ENCODE measurements at regions of chr11 and their contacts with region 1.

Region 1: GRCh38 chr11:61004180-61004611 is 32.7 kb downstream of the CD6 start:
- DNase-seq: peak; percentile 80
- H3K4me3 Mint-ChIP-seq: peak overlapping the region; percentile 82
- H3K27ac Mint-ChIP-seq: peak overlapping the region; percentile 91
- H3K4me1 Mint-ChIP-seq: peaks cover 69% of the 10 kb centered on the region
- H3K27me3 Mint-ChIP-seq: no peaks in the 10 kb centered on the region

Region 2: GRCh38 chr11:60725592-60725991 is 278.6 kb before region 1 on chr11:
- intact Hi-C with region 1: no loop called
- DNase-seq: no peak
- H3K4me3 Mint-ChIP-seq: no peak overlapping the region
- H3K27ac Mint-ChIP-seq: no peak overlapping the region
- H3K4me1 Mint-ChIP-seq: no peaks in the 10 kb centered on the region
- H3K27me3 Mint-ChIP-seq: peaks cover 3% of the 10 kb centered on the region

Region 3: DNA sequence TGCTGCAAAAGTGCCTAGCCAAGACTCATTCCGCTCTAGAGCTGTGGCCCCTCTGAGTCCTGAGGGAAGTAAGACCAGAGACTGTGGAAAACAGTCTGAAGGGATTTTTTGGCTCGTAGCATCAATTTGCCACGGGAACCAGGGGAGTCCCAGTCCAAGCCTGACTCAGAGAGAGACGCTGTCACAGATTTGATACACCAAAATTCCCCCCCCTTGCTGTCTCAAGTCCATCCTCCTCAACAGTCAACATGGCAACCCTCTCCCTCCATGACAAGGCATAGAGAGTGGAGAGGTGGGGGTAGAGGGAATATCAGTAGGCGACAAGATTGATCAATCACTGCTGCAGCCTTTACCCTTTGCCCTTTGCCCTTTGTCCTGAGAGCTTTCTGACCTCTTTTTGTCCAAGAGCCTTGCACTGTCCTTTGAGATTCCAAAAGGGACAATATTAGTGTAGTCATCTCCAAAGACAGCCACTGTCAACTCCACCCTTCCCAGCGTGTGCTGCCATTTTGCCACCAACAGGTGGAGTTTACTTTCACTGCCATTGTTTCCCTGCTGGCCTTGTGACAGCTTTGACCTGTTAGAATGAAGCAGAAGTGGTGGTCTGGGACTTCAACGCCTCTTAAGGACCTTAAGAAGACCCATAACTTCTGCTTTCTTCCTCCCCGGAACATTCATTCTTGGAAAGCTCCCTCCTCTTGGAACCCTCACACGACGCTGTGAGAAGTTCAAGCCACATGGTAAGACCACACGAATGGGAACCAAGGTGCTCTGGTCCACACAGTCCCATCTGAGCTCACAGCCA is 59.5 kb before region 1 on chr11:
- intact Hi-C with region 1: no loop called
- DNase-seq: no peak
- H3K4me3 Mint-ChIP-seq: no peak overlapping the region
- H3K27ac Mint-ChIP-seq: no peak overlapping the region
- H3K4me1 Mint-ChIP-seq: peaks cover 6% of the 10 kb centered on the region
- H3K27me3 Mint-ChIP-seq: peaks cover 10% of the 10 kb centered on the region

Region 4: GRCh38 chr11:60985991-60986915 is 17.9 kb before region 1 on chr11:
- intact Hi-C with region 1: loop called (anchors 1 kb)
- DNase-seq: peak; percentile 95
- H3K4me3 Mint-ChIP-seq: peak overlapping the region; percentile 84
- H3K27ac Mint-ChIP-seq: peak overlapping the region; percentile 94
- H3K4me1 Mint-ChIP-seq: peaks cover 88% of the 10 kb centered on the region
- H3K27me3 Mint-ChIP-seq: no peaks in the 10 kb centered on the region

Region 5: GRCh38 chr11:60992842-60993409 is 11.3 kb before region 1 on chr11:
- intact Hi-C with region 1: loop called (anchors 1 kb)
- DNase-seq: no peak
- H3K4me3 Mint-ChIP-seq: peak overlapping the region; percentile 69
- H3K27ac Mint-ChIP-seq: peak overlapping the region; percentile 96
- H3K4me1 Mint-ChIP-seq: peaks cover 68% of the 10 kb centered on the region
- H3K27me3 Mint-ChIP-seq: no peaks in the 10 kb centered on the region